Lower leg skin (tissue), 4 donors: ENCODE measurements at regions of chr7 and their contacts with region 1.

Region 1: DNA sequence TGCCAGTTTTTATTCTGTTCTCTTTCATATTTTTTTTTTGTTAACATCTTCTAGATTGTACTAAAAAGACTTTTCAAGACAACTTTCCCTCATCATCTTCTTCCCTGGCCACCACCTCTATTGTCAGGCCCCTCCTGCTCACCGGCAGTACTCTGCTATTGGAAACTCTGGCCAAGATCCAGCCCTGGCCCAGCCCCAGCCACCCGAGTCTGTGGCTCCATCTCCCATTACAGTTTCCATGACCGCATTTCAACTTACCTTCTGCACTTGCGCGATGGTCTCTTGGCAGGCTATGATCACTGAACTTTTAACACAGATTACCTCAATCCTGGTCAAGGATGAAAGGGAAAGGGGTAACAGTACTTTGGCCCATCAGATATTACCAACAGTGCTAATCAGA is 137.7 kb upstream of the POM121L12 start:
- DNase-seq: no peak
- H3K4me3 ChIP-seq: no peak overlapping the region
- CTCF ChIP-seq: no peak
- POLR2A ChIP-seq: no peak

Region 2: GRCh38 chr7:52826515-52827265 is 71.0 kb before region 1 on chr7:
- intact Hi-C with region 1: no loop called
- DNase-seq: no peak
- H3K4me3 ChIP-seq: no peak overlapping the region
- CTCF ChIP-seq: no peak
- POLR2A ChIP-seq: no peak

Region 3: GRCh38 chr7:52876402-52876801 is 21.3 kb before region 1 on chr7:
- intact Hi-C with region 1: loop called (anchors 1 kb)
- DNase-seq: no peak
- H3K4me3 ChIP-seq: no peak overlapping the region
- CTCF ChIP-seq: no peak
- POLR2A ChIP-seq: no peak

Region 4: GRCh38 chr7:53035499-53036412 is 138.0 kb after region 1 on chr7 and contains the start of gene POM121L12:
- intact Hi-C with region 1: no loop called
- DNase-seq: no peak
- H3K4me3 ChIP-seq: no peak within 1 kb of the TSS
- CTCF ChIP-seq: no peak
- POLR2A ChIP-seq: no peak
- total RNA-seq, gene POM121L12: not detected